Aorta (tissue), 5 donors: ENCODE measurements at regions of chr5 and their contacts with region 1.

Region 1: GRCh38 chr5:159965031-159965837 is 43.7 kb upstream of the TTC1 start:
- DNase-seq: peak; percentile 78 to 89
- ATAC-seq: peak; percentile 72
- H3K4me3 ChIP-seq: no peak overlapping the region
- H3K27ac ChIP-seq: no peak overlapping the region
- H3K4me1 ChIP-seq: no peaks in the 10 kb centered on the region
- H3K27me3 ChIP-seq: no peaks in the 10 kb centered on the region

Region 2: GRCh38 chr5:159230657-159231056 is 734.6 kb before region 1 on chr5:
- intact Hi-C with region 1: no loop called
- DNase-seq: no peak
- ATAC-seq: no peak
- H3K4me3 ChIP-seq: no peak overlapping the region
- H3K27ac ChIP-seq: no peak overlapping the region
- H3K4me1 ChIP-seq: no peaks in the 10 kb centered on the region
- H3K27me3 ChIP-seq: peaks cover 0 to 1% of the 10 kb centered on the region in 2 donors

Region 3: GRCh38 chr5:159444441-159445082 is 520.7 kb before region 1 on chr5:
- intact Hi-C with region 1: loop called in 1 of 2 experiments (anchors 5 kb)
- DNase-seq: no peak
- ATAC-seq: no peak
- H3K4me3 ChIP-seq: no peak overlapping the region
- H3K27ac ChIP-seq: no peak overlapping the region
- H3K4me1 ChIP-seq: no peaks in the 10 kb centered on the region
- H3K27me3 ChIP-seq: no peaks in the 10 kb centered on the region